SK-N-SH (cell line): ENCODE measurements at regions of chr14 and their contacts with region 1.

Region 1: DNA sequence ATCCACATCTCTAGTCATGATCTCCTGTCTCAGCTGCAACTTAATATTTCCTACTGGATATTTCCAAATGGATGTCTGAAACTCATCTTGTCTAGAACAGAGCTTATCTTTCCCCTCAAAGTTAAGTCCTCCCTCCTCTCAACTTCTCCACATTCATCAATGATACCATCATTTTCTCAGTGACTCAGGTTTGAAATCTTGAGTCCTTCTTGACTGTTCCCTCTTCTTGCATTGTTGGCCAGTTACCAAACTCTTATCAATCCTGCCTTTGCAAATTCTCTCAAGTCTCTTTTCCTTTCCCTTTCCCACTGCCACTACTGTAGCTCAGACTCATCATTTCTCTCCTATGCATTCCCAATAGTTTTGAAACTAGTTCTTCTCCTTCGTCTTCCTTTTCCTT is 14.3 kb upstream of the CHURC1 start:
- DNase-seq: no peak
- H3K4me3 ChIP-seq: no peak overlapping the region
- H3K27ac ChIP-seq: no peak overlapping the region
- H3K4me1 ChIP-seq: no peaks in the 10 kb centered on the region
- H3K27me3 ChIP-seq: no peaks in the 10 kb centered on the region
- CTCF ChIP-seq: no peak
- EP300 ChIP-seq: no peak
- RAD21 ChIP-seq: no peak

Region 2: GRCh38 chr14:64910847-64911495 is 11.0 kb after region 1 on chr14:
- CTCF ChIA-PET with region 1: interaction called, 16 read pairs
- POLR2A ChIA-PET with region 1: no interaction called
- DNase-seq: peak; percentile 35
- H3K4me3 ChIP-seq: no peak overlapping the region
- H3K27ac ChIP-seq: no peak overlapping the region
- H3K4me1 ChIP-seq: peaks cover 0 to 9% of the 10 kb centered on the region in 2 experiments; a peak in 2 of 4 replicates
- H3K27me3 ChIP-seq: no peaks in the 10 kb centered on the region
- CTCF ChIP-seq: peak; percentile 87
- EP300 ChIP-seq: no peak
- RAD21 ChIP-seq: peak; percentile 67